ENCODE measurements at regions of chr20 and their contacts with region 1.

Region 1: DNA sequence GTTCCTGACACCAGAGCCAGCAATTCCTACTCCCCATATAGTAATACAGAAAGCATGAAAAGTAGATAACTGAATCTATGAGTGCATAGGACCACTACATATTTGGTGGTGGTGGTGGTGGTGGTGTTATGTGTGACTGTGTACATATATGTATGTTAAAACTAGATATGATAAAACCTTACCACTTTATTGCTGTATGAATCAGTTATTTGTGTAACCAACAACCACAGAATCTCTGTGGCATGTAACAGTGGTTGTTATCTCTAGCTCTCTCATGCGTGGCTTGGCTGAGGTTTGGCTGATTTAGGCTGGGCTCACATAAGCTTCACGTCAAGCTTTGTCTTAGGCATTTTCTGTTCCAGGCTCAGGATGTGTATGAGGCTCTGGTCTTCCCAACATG is 55.7 kb downstream of the PLCB1 start:
- DNase-seq: no peak
- ATAC-seq: no peak

Region 2: GRCh38 chr20:7989379-7989778 is 198.4 kb before region 1 on chr20:
- intact Hi-C with region 1: no loop called
- DNase-seq: no peak
- ATAC-seq: no peak

Region 3: GRCh38 chr20:8166730-8167129 is 21.0 kb before region 1 on chr20:
- intact Hi-C with region 1: loop called (anchors 1 kb)
- DNase-seq: no peak
- ATAC-seq: peak; percentile 30

Measured in Right ventricle myocardium inferior (tissue), 1 donor.